ENCODE measurements at regions of chr3 and their contacts with region 1.

Region 1: GRCh38 chr3:143972505-143973255 is 1.1 kb downstream of the DIPK2A start:
- DNase-seq: peak; percentile 88
- ATAC-seq: peak; percentile 25
- H3K4me3 ChIP-seq: peak overlapping the region; percentile 84 to 92 (median 90)
- H3K4me3 Mint-ChIP-seq: peak overlapping the region; percentile 97
- H3K27ac ChIP-seq: peak overlapping the region; percentile 91 to 93
- H3K27ac Mint-ChIP-seq: peak overlapping the region; percentile 96
- H3K4me1 ChIP-seq: peaks cover 17 to 46% of the 10 kb centered on the region in 2 donors
- H3K4me1 Mint-ChIP-seq: peaks cover 40% of the 10 kb centered on the region
- H3K27me3 ChIP-seq: no peaks in the 10 kb centered on the region
- H3K27me3 Mint-ChIP-seq: no peaks in the 10 kb centered on the region
- CTCF ChIP-seq: peak; percentile 67

Region 2: DNA sequence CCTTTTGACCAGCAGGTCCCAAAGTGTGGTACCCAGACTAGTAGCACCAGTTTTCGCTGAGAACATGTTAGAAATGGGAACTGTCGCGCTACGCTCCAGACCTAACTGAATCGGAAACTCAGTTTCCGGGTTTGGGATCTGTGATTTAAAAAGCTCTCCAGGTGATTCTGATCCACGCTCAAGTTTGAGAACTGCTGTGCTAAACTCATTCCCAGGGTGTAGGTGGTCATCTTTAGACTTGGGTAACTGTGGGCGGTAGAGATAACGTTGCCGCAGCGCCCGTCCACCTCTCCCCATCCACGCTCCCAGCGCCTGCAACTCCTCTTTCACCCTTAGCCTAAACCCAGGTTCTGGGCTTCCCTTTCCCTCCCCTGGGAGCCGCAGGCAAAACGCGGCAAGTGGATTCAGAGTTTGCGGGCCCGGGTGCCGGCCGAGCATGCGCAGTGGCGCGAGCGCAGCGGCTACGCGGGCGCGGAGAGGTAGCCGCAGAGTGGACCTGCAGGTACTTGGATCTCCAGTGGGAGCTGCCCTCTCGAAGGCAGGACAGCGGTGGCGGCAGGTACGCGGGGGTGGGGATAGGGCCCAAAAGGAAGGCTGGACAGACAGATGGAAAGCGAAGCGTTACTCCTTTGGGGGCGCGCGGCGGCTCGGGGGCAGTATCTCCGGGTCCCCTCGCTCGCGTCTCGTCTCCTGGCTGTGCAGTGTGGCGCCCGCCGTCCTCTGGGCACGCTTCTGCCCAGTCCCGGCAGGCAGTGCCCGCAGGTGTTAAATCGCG is 1376.5 kb before region 1 on chr3 and contains the start of gene PLS1:
- CTCF ChIA-PET with region 1: interaction called, 3 read pairs
- POLR2A ChIA-PET with region 1: no interaction called
- intact Hi-C with region 1: loop called (anchors 5 kb)
- DNase-seq: peak; percentile 87
- ATAC-seq: peak; percentile 87
- H3K4me3 ChIP-seq: peak within 1 kb of the TSS; percentile 68 to 77 (median 72)
- H3K4me3 Mint-ChIP-seq: peak within 1 kb of the TSS; percentile 99
- H3K27ac ChIP-seq: peak within 1 kb of the TSS in 1 of 2 donors; percentile 27
- H3K27ac Mint-ChIP-seq: peak within 1 kb of the TSS; percentile 87
- H3K4me1 ChIP-seq: peaks cover 10 to 15% of the 10 kb centered on the region in 2 donors
- H3K4me1 Mint-ChIP-seq: peaks cover 19% of the 10 kb centered on the region
- H3K27me3 ChIP-seq: peaks cover 0 to 7% (median 2%) of the 10 kb centered on the region in 4 experiments
- H3K27me3 Mint-ChIP-seq: peaks cover 12% of the 10 kb centered on the region
- CTCF ChIP-seq: no peak
- total RNA-seq, gene PLS1: 0.73 and 0.74 TPM in 2 replicates

Region 3: DNA sequence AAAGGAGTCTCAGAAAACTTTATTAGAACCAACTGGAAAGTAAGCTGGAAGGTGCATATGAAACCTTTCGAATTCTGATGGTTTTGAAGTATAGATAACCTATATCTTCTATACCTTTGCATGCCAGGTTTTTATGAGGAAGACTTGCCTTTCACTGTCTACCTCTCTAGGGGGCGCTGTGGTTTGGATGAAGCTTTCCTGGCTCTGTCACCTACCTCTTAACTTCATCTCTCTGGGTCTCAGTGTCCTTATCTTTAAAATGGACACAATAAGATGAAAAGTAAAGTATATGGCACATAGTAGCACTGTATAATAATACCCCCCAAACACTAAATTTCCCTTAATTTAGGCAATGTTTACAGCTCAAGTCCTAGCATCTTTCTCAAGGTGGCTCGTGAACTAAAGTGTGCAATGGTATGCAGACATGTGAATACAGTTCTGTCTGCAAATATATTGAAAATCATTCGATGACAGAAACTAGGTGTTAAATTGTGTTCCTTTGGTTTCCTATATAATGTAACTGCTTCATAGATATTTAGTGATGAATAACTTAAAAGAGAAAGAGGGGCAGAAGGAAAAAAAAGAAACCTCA is 538.8 kb before region 1 on chr3:
- CTCF ChIA-PET with region 1: no interaction called
- POLR2A ChIA-PET with region 1: no interaction called
- intact Hi-C with region 1: loop called (anchors 5 kb)
- DNase-seq: peak; percentile 34
- ATAC-seq: no peak
- H3K4me3 ChIP-seq: no peak overlapping the region
- H3K4me3 Mint-ChIP-seq: no peak overlapping the region
- H3K27ac ChIP-seq: no peak overlapping the region
- H3K27ac Mint-ChIP-seq: no peak overlapping the region
- H3K4me1 ChIP-seq: peaks cover 17% of the 10 kb centered on the region in 2 donors
- H3K4me1 Mint-ChIP-seq: peaks cover 25% of the 10 kb centered on the region
- H3K27me3 ChIP-seq: no peaks in the 10 kb centered on the region
- H3K27me3 Mint-ChIP-seq: no peaks in the 10 kb centered on the region
- CTCF ChIP-seq: peak; percentile 58

Region 4: GRCh38 chr3:143855183-143855582 is 117.5 kb before region 1 on chr3:
- CTCF ChIA-PET with region 1: no interaction called
- POLR2A ChIA-PET with region 1: no interaction called
- intact Hi-C with region 1: no loop called
- DNase-seq: no peak
- ATAC-seq: no peak
- H3K4me3 ChIP-seq: no peak overlapping the region
- H3K4me3 Mint-ChIP-seq: no peak overlapping the region
- H3K27ac ChIP-seq: no peak overlapping the region
- H3K27ac Mint-ChIP-seq: no peak overlapping the region
- H3K4me1 ChIP-seq: peaks cover 0 to 4% of the 10 kb centered on the region in 2 donors
- H3K4me1 Mint-ChIP-seq: peaks cover 10% of the 10 kb centered on the region
- H3K27me3 ChIP-seq: no peaks in the 10 kb centered on the region
- H3K27me3 Mint-ChIP-seq: peaks cover 7% of the 10 kb centered on the region
- CTCF ChIP-seq: no peak

Region 5: GRCh38 chr3:143885780-143886427 is 86.8 kb before region 1 on chr3:
- CTCF ChIA-PET with region 1: interaction called, 19 read pairs
- POLR2A ChIA-PET with region 1: no interaction called
- intact Hi-C with region 1: no loop called
- DNase-seq: peak; percentile 61
- ATAC-seq: peak; percentile 80
- H3K4me3 ChIP-seq: no peak overlapping the region
- H3K4me3 Mint-ChIP-seq: no peak overlapping the region
- H3K27ac ChIP-seq: no peak overlapping the region
- H3K27ac Mint-ChIP-seq: no peak overlapping the region
- H3K4me1 ChIP-seq: no peaks in the 10 kb centered on the region
- H3K4me1 Mint-ChIP-seq: no peaks in the 10 kb centered on the region
- H3K27me3 ChIP-seq: peaks cover 0 to 2% (median 0%) of the 10 kb centered on the region in 4 experiments
- H3K27me3 Mint-ChIP-seq: no peaks in the 10 kb centered on the region
- CTCF ChIP-seq: peak; percentile 88

Region 6: DNA sequence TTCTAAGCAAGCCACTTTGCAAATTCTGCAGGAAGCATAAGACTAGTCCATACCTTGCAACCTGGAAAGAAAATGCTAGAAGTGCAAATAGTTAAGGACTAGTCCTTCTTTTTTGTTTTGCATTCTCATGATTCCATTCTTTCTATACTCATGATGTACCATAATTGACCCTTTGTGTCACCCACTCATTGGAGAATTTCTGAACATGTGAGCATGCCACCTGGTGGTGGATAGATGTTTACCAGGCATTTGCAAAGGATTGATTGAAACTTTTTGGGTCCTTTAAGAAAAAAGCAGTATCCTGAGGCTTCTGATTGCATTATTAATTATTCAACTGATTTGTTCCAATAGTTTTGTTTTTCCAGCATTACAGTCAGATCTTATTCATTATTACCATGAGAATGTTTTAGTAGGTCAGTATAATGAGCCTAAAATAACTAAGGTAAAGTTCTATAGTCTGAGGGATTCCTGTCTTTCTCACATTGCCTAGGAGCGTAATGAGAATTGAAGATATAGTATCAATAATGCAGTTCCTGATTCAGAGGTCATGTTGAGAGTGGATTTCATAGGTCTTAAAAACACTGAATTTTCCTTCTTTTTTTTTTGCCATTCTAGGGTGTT is 21.2 kb before region 1 on chr3:
- CTCF ChIA-PET with region 1: interaction called, 34 read pairs
- POLR2A ChIA-PET with region 1: no interaction called
- intact Hi-C with region 1: loop called (anchors 2 kb)
- DNase-seq: peak; percentile 69
- ATAC-seq: peak; percentile 64
- H3K4me3 ChIP-seq: no peak overlapping the region
- H3K4me3 Mint-ChIP-seq: no peak overlapping the region
- H3K27ac ChIP-seq: no peak overlapping the region
- H3K27ac Mint-ChIP-seq: no peak overlapping the region
- H3K4me1 ChIP-seq: no peaks in the 10 kb centered on the region
- H3K4me1 Mint-ChIP-seq: no peaks in the 10 kb centered on the region
- H3K27me3 ChIP-seq: no peaks in the 10 kb centered on the region
- H3K27me3 Mint-ChIP-seq: peaks cover 5% of the 10 kb centered on the region
- CTCF ChIP-seq: peak; percentile 91

Region 7: GRCh38 chr3:144028798-144029411 is 56.2 kb after region 1 on chr3:
- CTCF ChIA-PET with region 1: interaction called, 8 read pairs
- POLR2A ChIA-PET with region 1: interaction called, 4 read pairs
- intact Hi-C with region 1: loop called (anchors 2 kb)
- DNase-seq: peak; percentile 79
- ATAC-seq: peak; percentile 90
- H3K4me3 ChIP-seq: no peak overlapping the region
- H3K4me3 Mint-ChIP-seq: peak overlapping the region; percentile 42
- H3K27ac ChIP-seq: peak overlapping the region; percentile 4 to 54
- H3K27ac Mint-ChIP-seq: peak overlapping the region; percentile 84
- H3K4me1 ChIP-seq: peaks cover 12 to 14% of the 10 kb centered on the region in 2 donors
- H3K4me1 Mint-ChIP-seq: peaks cover 32% of the 10 kb centered on the region
- H3K27me3 ChIP-seq: no peaks in the 10 kb centered on the region
- H3K27me3 Mint-ChIP-seq: no peaks in the 10 kb centered on the region
- CTCF ChIP-seq: no peak

Measured in B cell (primary cell).